ENCODE measurements at regions of chr19 and their contacts with region 1.

Region 1: DNA sequence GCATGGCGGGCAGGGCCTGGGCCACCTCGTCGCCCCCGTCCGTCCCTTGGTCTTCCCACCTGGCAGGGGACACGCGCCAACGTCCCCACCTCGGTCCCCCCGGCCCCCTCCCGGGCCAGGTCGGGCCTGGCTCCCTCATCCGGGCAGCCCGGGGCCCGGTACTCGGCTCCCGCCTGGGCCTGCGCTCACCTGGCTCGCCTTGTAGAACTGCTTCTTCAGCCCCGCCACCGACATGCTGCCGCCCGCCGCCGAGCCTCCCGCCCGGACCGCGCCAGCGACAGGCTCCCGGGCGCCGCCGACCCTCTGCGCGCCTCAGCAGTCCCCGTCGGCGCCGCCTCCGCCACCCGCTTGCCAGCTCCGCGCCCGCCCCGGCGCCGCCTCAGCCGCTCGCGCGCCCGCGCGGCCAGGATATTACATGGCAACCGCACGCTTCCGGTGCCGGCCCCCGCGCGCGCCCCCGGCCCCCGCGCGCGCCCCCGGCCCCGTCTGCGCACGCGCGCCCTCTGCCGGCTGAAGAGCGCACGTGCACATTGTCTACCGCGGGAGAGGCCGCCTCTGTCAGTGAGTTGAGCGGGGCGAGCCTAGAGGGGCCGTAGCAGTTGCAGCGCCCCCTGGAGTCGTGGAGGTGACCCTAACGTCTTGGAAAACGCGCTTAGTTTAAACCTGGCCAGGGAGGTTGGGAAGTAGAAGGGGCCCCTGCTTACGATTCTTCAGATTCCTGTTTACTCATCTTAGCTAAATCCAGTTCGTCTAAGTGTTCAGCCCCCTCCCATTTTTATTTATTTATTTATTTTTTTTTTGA is at the start of gene SH3GL1:
- DNase-seq: peak; percentile 80 to 97 (median 94)
- ATAC-seq: peak; percentile 66
- H3K4me3 ChIP-seq: peak within 1 kb of the TSS; percentile 83 to 92
- H3K4me3 Mint-ChIP-seq: peak within 1 kb of the TSS; percentile 91
- H3K27ac ChIP-seq: peak within 1 kb of the TSS; percentile 77 to 97
- H3K27ac Mint-ChIP-seq: peak within 1 kb of the TSS; percentile 98
- H3K4me1 ChIP-seq: peaks cover 44% of the 10 kb centered on the region
- H3K4me1 Mint-ChIP-seq: peaks cover 55% of the 10 kb centered on the region
- H3K27me3 ChIP-seq: no peaks in the 10 kb centered on the region
- H3K27me3 Mint-ChIP-seq: no peaks in the 10 kb centered on the region
- CTCF ChIP-seq: peak; percentile 71
- total RNA-seq, gene SH3GL1: 35.0 to 38.1 TPM

Region 2: DNA sequence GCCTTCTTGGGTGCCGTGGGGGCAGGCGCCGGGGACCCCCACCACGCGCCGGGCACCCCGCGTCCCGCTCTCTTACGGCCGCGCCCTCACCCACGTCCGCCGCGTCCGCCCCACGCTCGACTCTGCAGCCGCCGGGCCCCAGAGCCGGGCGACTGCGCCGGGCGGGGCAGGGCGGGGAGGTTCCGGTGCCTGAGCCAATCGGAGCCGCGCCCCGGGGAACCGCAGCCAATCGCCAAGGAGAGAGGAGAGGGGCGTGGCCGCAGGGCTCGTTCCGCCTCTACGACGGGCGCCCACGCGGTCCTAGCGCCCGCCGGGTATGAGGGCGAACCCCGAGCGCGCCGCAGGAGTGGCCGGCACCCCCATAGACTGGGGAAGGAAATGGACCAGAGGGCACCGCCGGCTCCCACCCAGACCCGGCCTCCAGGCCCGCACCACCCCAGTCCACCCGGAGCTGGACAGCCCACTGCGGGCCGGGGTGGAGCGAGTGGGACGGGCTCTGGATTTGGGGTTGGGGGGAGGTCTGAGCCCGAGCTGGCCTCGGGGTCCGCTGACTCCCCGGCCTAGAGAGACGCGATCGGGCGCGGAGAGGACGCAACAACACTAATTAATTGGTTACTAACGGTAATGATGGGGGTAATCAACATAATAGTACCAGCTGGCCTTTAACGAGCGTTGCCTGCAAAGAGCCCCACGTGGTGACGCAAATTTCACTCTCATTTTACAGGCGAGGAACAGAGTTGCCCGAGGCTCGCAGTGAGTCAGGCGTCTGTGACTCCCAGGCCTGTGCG is 842.7 kb before region 1 on chr19 and contains the start of gene MFSD12:
- CTCF ChIA-PET with region 1: no interaction called
- POLR2A ChIA-PET with region 1: no interaction called
- intact Hi-C with region 1: loop called in 1 of 2 experiments (anchors 5 kb)
- DNase-seq: peak; percentile 88 to 97 (median 96)
- ATAC-seq: peak; percentile 85
- H3K4me3 ChIP-seq: peak within 1 kb of the TSS; percentile 68 to 95
- H3K4me3 Mint-ChIP-seq: peak within 1 kb of the TSS; percentile 96
- H3K27ac ChIP-seq: peak within 1 kb of the TSS; percentile 56 to 64
- H3K27ac Mint-ChIP-seq: peak within 1 kb of the TSS; percentile 95
- H3K4me1 ChIP-seq: peaks cover 46% of the 10 kb centered on the region
- H3K4me1 Mint-ChIP-seq: peaks cover 36% of the 10 kb centered on the region
- H3K27me3 ChIP-seq: no peaks in the 10 kb centered on the region
- H3K27me3 Mint-ChIP-seq: no peaks in the 10 kb centered on the region
- CTCF ChIP-seq: no peak
- total RNA-seq, gene MFSD12: 42.3 to 42.7 TPM

Region 3: GRCh38 chr19:4065430-4066175 is 334.7 kb before region 1 on chr19:
- CTCF ChIA-PET with region 1: no interaction called
- POLR2A ChIA-PET with region 1: no interaction called
- intact Hi-C with region 1: loop called in 1 of 2 experiments (anchors 2 kb)
- DNase-seq: peak; percentile 94 to 99 (median 97)
- ATAC-seq: peak; percentile 72
- H3K4me3 ChIP-seq: peak overlapping the region; percentile 86 to 89
- H3K4me3 Mint-ChIP-seq: peak overlapping the region; percentile 73
- H3K27ac ChIP-seq: no peak overlapping the region
- H3K27ac Mint-ChIP-seq: no peak overlapping the region
- H3K4me1 ChIP-seq: peaks cover 58% of the 10 kb centered on the region
- H3K4me1 Mint-ChIP-seq: peaks cover 40% of the 10 kb centered on the region
- H3K27me3 ChIP-seq: no peaks in the 10 kb centered on the region
- H3K27me3 Mint-ChIP-seq: no peaks in the 10 kb centered on the region
- CTCF ChIP-seq: no peak

Region 4: DNA sequence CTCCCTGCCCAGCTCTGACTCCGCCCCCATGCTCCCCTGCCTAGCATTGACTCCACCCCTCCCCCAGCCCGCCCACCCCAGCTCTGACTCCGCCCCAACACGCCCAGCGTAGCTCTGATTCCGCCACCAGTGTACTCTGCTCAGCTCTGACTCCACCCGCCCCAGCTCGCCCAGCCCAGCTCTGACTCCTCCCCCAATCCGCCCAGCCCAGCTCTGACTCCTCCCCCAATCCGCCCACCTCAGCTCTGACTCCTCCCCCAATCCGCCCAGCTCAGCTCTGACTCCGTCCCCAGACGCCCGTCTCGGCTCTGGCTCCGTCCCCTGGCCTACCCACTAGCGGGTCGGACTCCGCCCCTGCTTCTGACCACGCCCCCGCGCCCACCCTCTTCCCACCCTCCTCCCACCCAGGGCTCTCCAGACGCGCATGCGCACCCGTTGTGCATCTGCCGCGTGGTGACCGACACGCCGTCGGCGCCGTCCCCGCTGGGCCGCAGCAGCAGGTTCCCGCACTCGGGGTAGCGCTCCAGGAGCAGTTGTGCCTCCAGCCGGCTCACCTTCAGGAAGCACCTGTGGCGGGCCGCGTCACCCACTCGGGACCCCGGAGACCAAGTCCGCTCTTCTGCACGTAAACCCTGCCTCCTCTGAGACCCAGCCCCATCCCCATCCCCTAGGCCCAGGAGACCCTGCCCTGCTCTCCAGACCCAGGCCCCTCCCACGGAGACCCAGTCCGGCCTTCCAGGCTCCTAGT is 71.9 kb before region 1 on chr19:
- CTCF ChIA-PET with region 1: no interaction called
- POLR2A ChIA-PET with region 1: interaction called, 3 read pairs
- intact Hi-C with region 1: loop called in 1 of 2 experiments (anchors 1 kb)
- DNase-seq: peak; percentile 84 to 99 (median 97)
- ATAC-seq: peak; percentile 95
- H3K4me3 ChIP-seq: peak overlapping the region; percentile 53 to 81
- H3K4me3 Mint-ChIP-seq: peak overlapping the region; percentile 80
- H3K27ac ChIP-seq: peak overlapping the region in 1 of 2 experiments; percentile 55
- H3K27ac Mint-ChIP-seq: peak overlapping the region; percentile 92
- H3K4me1 ChIP-seq: peaks cover 20% of the 10 kb centered on the region
- H3K4me1 Mint-ChIP-seq: peaks cover 27% of the 10 kb centered on the region
- H3K27me3 ChIP-seq: no peaks in the 10 kb centered on the region
- H3K27me3 Mint-ChIP-seq: no peaks in the 10 kb centered on the region
- CTCF ChIP-seq: no peak

Region 5: DNA sequence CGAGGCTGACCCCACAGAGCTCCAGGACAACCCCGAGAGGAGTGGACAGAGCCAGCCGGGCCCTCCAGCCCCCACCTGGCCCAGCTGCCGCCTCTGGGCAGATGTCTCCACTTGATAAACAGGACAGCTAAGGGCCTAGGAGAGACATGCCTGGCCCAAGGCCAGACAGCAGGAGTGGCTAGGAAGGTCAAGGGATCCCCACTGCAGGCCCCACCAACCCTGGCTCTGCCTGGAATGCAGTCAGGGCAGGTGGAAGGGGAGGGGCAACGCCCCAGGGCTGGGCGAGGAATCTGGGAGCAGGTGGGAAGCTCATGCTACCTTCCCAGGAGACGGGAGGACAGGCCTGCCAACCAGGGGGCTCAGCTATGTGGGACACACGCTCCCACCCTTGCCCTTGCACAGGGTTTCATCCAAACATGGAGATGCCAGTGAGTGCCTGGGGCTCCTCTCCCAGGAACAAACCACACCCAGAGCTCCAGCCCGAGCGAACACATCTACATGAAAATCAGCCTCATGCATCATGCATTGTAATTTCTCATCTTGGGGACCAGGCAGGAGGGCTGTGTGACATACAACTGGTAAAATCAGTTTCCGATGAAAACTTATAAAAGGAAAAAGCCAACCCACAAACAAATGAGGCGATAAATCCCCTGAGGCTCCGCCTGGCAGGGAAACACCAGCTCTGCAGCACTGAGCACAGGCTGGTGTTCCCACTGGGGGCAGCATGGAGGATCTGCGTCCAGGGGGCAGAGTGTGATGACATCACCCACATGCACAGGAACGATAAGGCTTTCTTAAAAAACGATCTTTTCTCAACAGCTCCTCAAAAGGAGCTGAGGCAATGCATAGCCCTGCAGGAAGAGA is 24.9 kb before region 1 on chr19:
- CTCF ChIA-PET with region 1: interaction called, 6 read pairs
- POLR2A ChIA-PET with region 1: interaction called, 11 read pairs
- intact Hi-C with region 1: loop called (anchors 1 kb)
- DNase-seq: no peak
- ATAC-seq: no peak
- H3K4me3 ChIP-seq: no peak overlapping the region
- H3K4me3 Mint-ChIP-seq: no peak overlapping the region
- H3K27ac ChIP-seq: no peak overlapping the region
- H3K27ac Mint-ChIP-seq: no peak overlapping the region
- H3K4me1 ChIP-seq: peaks cover 54% of the 10 kb centered on the region
- H3K4me1 Mint-ChIP-seq: peaks cover 52% of the 10 kb centered on the region
- H3K27me3 ChIP-seq: no peaks in the 10 kb centered on the region
- H3K27me3 Mint-ChIP-seq: no peaks in the 10 kb centered on the region
- CTCF ChIP-seq: no peak

Region 6: GRCh38 chr19:4723367-4724187 is 323.2 kb after region 1 on chr19 and contains the start of gene DPP9:
- CTCF ChIA-PET with region 1: no interaction called
- POLR2A ChIA-PET with region 1: no interaction called
- intact Hi-C with region 1: loop called in 1 of 2 experiments (anchors 5 kb)
- DNase-seq: peak; percentile 93 to 99 (median 96)
- ATAC-seq: peak; percentile 94
- H3K4me3 ChIP-seq: peak within 1 kb of the TSS; percentile 76 to 78
- H3K4me3 Mint-ChIP-seq: peak within 1 kb of the TSS; percentile 93
- H3K27ac ChIP-seq: peak within 1 kb of the TSS; percentile 78 to 79
- H3K27ac Mint-ChIP-seq: peak within 1 kb of the TSS; percentile 97
- H3K4me1 ChIP-seq: peaks cover 31% of the 10 kb centered on the region
- H3K4me1 Mint-ChIP-seq: peaks cover 32% of the 10 kb centered on the region
- H3K27me3 ChIP-seq: no peaks in the 10 kb centered on the region
- H3K27me3 Mint-ChIP-seq: no peaks in the 10 kb centered on the region
- CTCF ChIP-seq: no peak
- total RNA-seq, gene DPP9: 85.5 to 86.6 TPM

Measured in CD8-positive, alpha-beta T cell (primary cell).